WTC11 (cell line): ENCODE measurements at regions of chr1 and their contacts with region 1.

Region 1: GRCh38 chr1:201955009-201955728 is at the start of gene TIMM17A:
- DNase-seq: peak; percentile 94
- ATAC-seq: peak; percentile 99
- H3K4me3 Mint-ChIP-seq: peak within 1 kb of the TSS; percentile 97
- H3K27ac Mint-ChIP-seq: peak within 1 kb of the TSS; percentile 98
- H3K4me1 Mint-ChIP-seq: peaks cover 10% of the 10 kb centered on the region
- H3K27me3 Mint-ChIP-seq: no peaks in the 10 kb centered on the region
- CTCF ChIP-seq: no peak
- total RNA-seq, gene TIMM17A: 50.3 to 56.1 TPM (median 51.2 TPM) in 3 replicates

Region 2: DNA sequence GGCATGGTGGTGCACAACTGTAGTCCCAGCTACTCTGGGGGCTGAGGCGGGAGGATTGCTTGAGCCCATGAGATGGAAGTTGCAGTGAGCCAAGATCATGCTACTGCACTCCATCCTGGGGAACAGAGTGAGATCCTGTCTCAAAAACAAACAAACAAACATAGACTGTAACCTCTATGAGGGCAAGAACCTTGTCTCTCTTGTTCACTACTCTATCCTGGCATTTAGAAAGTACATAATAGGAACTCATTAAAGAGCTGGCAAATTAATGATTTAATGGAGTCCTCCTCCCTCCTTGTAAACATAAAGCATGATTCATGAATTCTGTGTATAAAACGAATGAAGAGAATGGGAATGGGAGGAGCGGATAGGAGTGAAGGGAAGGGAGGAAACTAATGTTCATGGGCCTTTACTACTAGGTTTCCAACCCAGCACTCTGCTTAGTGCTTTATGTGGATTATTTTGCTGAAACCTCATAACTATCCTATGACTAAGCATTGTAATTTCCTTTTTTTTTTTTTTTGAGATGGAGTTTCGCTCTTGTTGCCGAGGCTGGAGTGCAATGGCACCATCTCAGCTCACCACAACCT is 17.4 kb before region 1 on chr1:
- CTCF ChIA-PET with region 1: interaction called, 5 read pairs
- POLR2A ChIA-PET with region 1: interaction called, 14 read pairs
- DNase-seq: no peak
- ATAC-seq: no peak
- H3K4me3 Mint-ChIP-seq: no peak overlapping the region
- H3K27ac Mint-ChIP-seq: no peak overlapping the region
- H3K4me1 Mint-ChIP-seq: peaks cover 9% of the 10 kb centered on the region
- H3K27me3 Mint-ChIP-seq: peaks cover 2% of the 10 kb centered on the region; the same call in 1 of the 2 replicates
- CTCF ChIP-seq: no peak